ENCODE measurements at regions of chr1 and their contacts with region 1.

Region 1: DNA sequence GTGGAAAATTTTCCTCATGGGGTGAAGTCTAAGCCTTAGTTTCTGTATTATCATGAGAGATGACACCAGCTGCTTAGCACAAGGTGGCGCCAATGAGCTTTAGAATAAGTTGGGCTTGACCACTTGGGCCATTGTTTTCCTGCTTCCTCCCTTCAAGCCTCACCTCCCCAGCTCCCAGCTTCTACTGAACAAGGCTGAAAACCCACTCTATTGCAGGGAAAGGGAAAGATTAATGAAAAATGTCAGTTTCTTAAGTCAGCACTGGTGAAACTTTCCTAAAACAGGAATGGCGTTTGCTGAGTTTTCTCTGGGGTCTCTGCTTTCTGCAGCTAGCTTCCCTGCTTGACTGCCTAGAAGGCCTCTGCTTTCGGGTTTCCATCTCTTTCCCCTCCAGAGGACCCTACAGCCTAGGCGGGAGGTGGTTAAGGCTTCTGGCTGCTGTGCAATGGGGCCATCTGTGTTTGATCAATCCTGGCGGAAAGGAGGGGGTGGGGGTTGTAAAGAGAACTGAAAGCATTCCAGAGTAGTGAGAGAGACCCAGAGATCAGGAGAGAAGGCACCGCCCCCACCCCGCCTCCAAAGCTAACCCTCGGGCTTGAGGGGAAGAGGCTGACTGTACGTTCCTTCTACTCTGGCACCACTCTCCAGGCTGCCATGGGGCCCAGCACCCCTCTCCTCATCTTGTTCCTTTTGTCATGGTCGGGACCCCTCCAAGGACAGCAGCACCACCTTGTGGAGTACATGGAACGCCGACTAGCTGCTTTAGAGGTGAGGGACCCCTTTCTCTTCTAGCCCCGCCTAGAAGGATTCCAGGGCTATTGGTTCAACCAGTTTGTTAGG is at the start of gene OLFML3:
- DNase-seq: peak; percentile 74

Region 2: GRCh38 chr1:113898241-113898814 is 80.8 kb before region 1 on chr1:
- CTCF ChIA-PET with region 1: interaction called, 13 read pairs
- POLR2A ChIA-PET with region 1: no interaction called
- DNase-seq: no peak

Region 3: GRCh38 chr1:113963281-113963906 is 15.7 kb before region 1 on chr1:
- CTCF ChIA-PET with region 1: interaction called, 10 read pairs
- POLR2A ChIA-PET with region 1: no interaction called
- DNase-seq: no peak

Region 4: GRCh38 chr1:114009393-114009792 is 30.3 kb after region 1 on chr1:
- CTCF ChIA-PET with region 1: no interaction called
- POLR2A ChIA-PET with region 1: no interaction called
- DNase-seq: no peak

Region 5: DNA sequence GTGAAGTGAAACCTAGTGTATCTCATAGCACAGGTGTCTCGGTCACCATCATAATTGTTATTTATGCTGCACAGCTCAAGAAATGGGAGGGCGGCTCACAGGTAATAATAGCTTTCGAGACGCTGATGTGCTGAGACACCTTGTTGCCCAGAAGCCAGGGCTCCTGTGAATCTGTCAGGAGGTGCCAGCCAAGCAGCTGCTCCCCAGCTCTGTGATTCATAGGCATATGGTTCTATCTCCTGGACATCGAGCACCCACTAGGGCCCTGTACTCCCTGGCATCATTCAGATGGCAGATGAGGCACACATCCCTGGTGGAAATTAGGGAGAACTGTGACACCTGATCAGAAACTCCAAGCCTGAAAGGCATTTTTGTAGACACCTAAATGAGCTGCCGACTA is 121.1 kb after region 1 on chr1:
- CTCF ChIA-PET with region 1: no interaction called
- POLR2A ChIA-PET with region 1: no interaction called
- DNase-seq: no peak

Region 6: GRCh38 chr1:114152508-114153260 is 173.6 kb after region 1 on chr1:
- CTCF ChIA-PET with region 1: interaction called, 12 read pairs
- POLR2A ChIA-PET with region 1: no interaction called
- DNase-seq: peak; percentile 76

Region 7: GRCh38 chr1:114282751-114283403 is 303.8 kb after region 1 on chr1:
- CTCF ChIA-PET with region 1: interaction called, 18 read pairs
- POLR2A ChIA-PET with region 1: interaction called, 3 read pairs
- DNase-seq: peak; percentile 94

Measured in HEK293T (cell line).